Activated B cell treated with CpG ODN at 0.5 μM for 24 hours (primary cell): ENCODE measurements at regions of chr3 and their contacts with region 1.

Region 1: DNA sequence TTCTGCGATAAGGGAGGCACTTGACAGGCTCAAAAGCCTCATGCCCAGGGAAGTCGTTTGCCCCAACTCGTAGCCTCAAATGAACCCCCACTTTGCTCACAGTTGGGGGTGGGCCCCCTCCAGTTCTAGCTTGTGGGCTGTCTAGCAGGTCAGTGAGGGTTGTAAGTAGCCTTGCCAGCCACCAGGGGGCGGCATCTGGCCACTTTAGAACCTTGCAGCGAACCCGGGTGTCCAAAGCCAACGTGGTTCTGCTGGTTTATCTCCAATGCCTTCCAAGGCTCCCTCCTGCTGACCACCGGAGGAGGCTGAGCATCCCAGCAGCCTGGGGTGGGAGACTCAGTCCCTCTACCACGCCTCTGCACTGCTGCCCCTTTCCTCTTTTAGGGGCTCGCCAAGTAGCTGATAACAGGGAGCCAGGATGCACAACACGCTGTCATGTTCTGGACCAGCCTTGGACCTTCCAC is 9.2 kb upstream of the RBSN start:
- DNase-seq: peak; percentile 66
- ATAC-seq: peak; percentile 98
- H3K4me3 Mint-ChIP-seq: no peak overlapping the region
- H3K27ac Mint-ChIP-seq: no peak overlapping the region
- H3K4me1 Mint-ChIP-seq: peaks cover 2% of the 10 kb centered on the region
- H3K27me3 Mint-ChIP-seq: peaks cover 7% of the 10 kb centered on the region
- CTCF ChIP-seq: peak; percentile 69

Region 2: GRCh38 chr3:16177962-16178627 is 1070.0 kb after region 1 on chr3:
- CTCF ChIA-PET with region 1: no interaction called
- POLR2A ChIA-PET with region 1: no interaction called
- intact Hi-C with region 1: loop called (anchors 5 kb)
- DNase-seq: peak; percentile 39
- ATAC-seq: peak; percentile 68
- H3K4me3 Mint-ChIP-seq: no peak overlapping the region
- H3K27ac Mint-ChIP-seq: no peak overlapping the region
- H3K4me1 Mint-ChIP-seq: peaks cover 8% of the 10 kb centered on the region
- H3K27me3 Mint-ChIP-seq: peaks cover 18% of the 10 kb centered on the region
- CTCF ChIP-seq: no peak

Region 3: GRCh38 chr3:16247276-16248061 is 1139.4 kb after region 1 on chr3:
- CTCF ChIA-PET with region 1: no interaction called
- POLR2A ChIA-PET with region 1: no interaction called
- intact Hi-C with region 1: loop called (anchors 5 kb)
- DNase-seq: peak; percentile 43
- ATAC-seq: peak; percentile 90
- H3K4me3 Mint-ChIP-seq: no peak overlapping the region
- H3K27ac Mint-ChIP-seq: no peak overlapping the region
- H3K4me1 Mint-ChIP-seq: peaks cover 18% of the 10 kb centered on the region
- H3K27me3 Mint-ChIP-seq: peaks cover 9% of the 10 kb centered on the region
- CTCF ChIP-seq: peak; percentile 87